Gastrocnemius medialis (tissue), 4 donors: ENCODE measurements at regions of chr1 and their contacts with region 1.

Region 1: DNA sequence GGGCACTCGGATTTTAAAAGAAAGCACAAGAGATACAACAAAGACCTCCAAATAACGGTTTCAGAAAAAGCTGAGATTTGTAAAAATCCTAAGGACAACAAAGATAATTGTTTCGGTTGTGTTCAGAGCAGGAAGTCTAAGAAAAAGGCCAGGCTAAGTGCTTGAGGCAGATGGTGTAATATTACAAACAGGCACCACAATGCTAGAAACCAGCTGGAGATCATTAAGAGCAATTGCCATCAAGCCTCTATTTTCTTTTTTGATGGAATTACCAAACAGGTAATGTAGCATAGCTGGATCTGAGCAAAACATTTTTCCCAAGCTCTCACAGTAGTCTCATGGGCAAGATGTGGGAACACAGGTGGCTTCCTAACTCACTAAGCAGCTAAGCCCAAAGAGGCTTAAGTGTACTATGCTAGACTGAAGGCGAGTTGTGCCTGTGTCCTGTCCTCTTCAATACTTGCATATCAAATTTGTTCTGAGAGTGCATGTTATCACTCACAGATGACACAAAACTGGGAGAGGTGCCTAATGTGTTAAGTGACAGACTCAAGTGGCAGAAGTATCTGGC is 161.6 kb downstream of the GLUL start:
- DNase-seq: peak; percentile 72 to 78
- ATAC-seq: peak; percentile 97
- H3K4me3 ChIP-seq: no peak overlapping the region
- H3K27ac ChIP-seq: peak overlapping the region; percentile 75 to 80 (median 80)
- H3K4me1 ChIP-seq: peaks cover 11 to 13% of the 10 kb centered on the region in 2 donors
- H3K27me3 ChIP-seq: no peaks in the 10 kb centered on the region
- CTCF ChIP-seq: no peak
- POLR2A ChIP-seq: peak; percentile 32 to 51

Region 2: DNA sequence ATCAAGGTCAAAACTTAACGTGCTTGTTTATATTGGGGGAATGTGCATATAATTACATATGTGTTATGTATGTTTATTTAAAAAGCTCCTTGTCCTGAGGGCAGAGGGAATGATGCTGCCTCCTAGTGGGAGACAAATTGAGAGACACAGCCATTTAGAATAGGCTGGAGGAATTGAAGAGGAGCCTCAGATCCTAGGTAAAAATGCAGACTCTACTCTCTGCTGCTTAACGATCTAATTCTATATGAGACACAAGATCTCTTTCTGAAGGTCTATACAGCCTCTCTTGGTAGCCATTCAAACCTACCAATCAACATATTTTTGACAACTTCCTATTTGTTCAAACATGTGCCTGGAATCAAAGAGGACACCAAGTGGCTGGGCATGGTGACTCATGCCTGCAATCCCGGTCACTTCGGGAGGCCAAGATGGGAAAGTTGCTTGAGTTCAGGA is 31.9 kb before region 1 on chr1:
- in situ Hi-C with region 1: no loop called
- intact Hi-C with region 1: loop called (anchors 1 kb)
- DNase-seq: peak in 1 of 2 donors; percentile 36
- ATAC-seq: no peak
- H3K4me3 ChIP-seq: no peak overlapping the region
- H3K27ac ChIP-seq: peak overlapping the region; percentile 64 to 83 (median 74)
- H3K4me1 ChIP-seq: peaks cover 21 to 35% of the 10 kb centered on the region in 2 donors
- H3K27me3 ChIP-seq: no peaks in the 10 kb centered on the region
- CTCF ChIP-seq: peak in 3 of 5 experiments; percentile 19 to 36 (median 27)
- POLR2A ChIP-seq: no peak

Region 3: DNA sequence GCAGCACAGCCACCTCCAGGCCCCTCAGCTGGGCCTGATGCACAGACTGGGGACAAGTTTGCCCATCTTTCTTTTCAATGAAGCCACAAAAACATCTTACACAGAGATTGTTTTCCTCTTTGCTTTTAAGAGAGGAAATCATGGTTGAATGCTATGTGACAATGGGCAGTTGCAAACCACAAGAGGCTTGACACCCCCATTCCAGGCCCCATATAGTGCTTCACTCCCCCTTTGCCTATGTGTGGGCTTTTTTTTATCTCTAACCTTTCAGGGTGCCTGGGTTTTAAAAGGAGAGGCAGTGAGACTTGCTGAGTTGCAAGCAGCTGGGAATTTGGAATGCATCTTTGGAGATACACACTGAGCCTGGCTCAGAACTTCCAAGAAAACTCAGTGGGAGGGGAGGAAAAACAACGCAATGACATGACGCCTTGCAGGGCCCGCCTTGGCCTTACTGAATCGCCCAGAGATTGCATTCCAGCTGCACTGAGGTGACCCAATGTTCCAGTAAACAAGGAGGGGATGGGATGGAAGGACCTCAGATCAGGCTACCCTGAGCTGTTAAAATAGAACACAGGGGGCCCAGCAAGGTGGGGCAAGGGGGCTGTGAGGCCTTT is 23.3 kb before region 1 on chr1:
- in situ Hi-C with region 1: no loop called
- intact Hi-C with region 1: loop called (anchors 2 kb)
- DNase-seq: peak; percentile 80 to 92
- ATAC-seq: peak; percentile 76 to 83
- H3K4me3 ChIP-seq: no peak overlapping the region
- H3K27ac ChIP-seq: peak overlapping the region; percentile 74 to 93 (median 87)
- H3K4me1 ChIP-seq: peaks cover 25 to 29% of the 10 kb centered on the region in 2 donors
- H3K27me3 ChIP-seq: no peaks in the 10 kb centered on the region
- CTCF ChIP-seq: no peak
- POLR2A ChIP-seq: peak; percentile 36 to 68

Region 4: GRCh38 chr1:182291584-182292192 is 61.7 kb after region 1 on chr1:
- in situ Hi-C with region 1: no loop called
- intact Hi-C with region 1: loop called (anchors 1 kb)
- DNase-seq: peak; percentile 72 to 78
- ATAC-seq: peak; percentile 37 to 54
- H3K4me3 ChIP-seq: peak overlapping the region in 1 of 4 donors; percentile 2
- H3K27ac ChIP-seq: peak overlapping the region; percentile 85 to 94 (median 90)
- H3K4me1 ChIP-seq: peaks cover 45 to 53% of the 10 kb centered on the region in 2 donors
- H3K27me3 ChIP-seq: no peaks in the 10 kb centered on the region
- CTCF ChIP-seq: no peak
- POLR2A ChIP-seq: peak; percentile 30 to 49